ENCODE measurements at regions of chr9 and their contacts with region 1.

Region 1: DNA sequence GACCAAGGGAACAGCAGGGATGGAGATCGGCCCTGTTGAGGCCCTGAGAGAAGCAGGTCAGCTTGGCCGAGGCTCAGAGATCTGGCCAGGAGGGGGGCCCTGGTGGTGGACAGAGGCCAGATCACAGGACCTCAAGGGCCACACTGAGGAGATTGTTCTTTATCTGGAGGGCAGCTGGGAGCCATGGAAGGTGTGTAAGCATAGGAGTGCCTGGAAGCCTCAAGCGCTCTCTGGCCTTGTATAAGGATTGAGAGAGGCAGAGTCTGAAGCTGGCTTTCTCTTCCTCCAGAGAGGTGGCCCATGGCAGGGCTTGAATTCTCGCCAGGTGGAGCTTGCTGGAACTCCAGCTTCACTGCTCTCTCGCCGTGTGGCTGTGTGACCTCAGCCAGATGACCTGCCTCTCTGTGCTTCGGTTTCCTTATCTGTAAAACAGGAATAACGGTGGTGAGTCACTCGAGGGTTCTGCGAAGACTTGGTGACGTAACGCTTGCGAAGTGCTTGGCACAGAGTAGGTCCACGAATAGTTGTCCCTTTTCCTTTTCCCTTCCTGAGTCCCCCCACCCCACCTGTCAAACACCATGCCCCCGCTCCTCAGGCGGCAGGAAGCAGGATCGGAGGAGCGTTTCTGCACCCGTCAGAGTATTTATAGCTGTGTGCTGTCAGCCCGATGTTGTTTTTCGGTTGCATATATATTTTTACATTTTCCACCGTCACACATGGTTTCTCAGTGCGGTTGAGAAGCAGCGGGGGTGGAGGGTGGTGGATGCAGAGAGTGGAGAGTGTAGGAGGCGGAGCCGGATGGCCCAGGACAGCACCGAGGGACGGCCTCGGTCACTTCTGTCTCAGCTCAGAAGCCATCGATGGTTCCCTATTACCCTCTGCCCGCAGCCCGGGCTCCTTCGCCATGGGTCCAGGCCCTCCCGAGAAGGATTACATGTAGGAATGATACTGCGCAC is 17.0 kb upstream of the CRB2 start:
- DNase-seq: peak; percentile 87
- ATAC-seq: peak; percentile 75
- H3K4me3 Mint-ChIP-seq: peak overlapping the region; percentile 62
- H3K27ac Mint-ChIP-seq: peak overlapping the region; percentile 99
- H3K4me1 Mint-ChIP-seq: peaks cover 35% of the 10 kb centered on the region
- H3K27me3 Mint-ChIP-seq: no peaks in the 10 kb centered on the region

Region 2: DNA sequence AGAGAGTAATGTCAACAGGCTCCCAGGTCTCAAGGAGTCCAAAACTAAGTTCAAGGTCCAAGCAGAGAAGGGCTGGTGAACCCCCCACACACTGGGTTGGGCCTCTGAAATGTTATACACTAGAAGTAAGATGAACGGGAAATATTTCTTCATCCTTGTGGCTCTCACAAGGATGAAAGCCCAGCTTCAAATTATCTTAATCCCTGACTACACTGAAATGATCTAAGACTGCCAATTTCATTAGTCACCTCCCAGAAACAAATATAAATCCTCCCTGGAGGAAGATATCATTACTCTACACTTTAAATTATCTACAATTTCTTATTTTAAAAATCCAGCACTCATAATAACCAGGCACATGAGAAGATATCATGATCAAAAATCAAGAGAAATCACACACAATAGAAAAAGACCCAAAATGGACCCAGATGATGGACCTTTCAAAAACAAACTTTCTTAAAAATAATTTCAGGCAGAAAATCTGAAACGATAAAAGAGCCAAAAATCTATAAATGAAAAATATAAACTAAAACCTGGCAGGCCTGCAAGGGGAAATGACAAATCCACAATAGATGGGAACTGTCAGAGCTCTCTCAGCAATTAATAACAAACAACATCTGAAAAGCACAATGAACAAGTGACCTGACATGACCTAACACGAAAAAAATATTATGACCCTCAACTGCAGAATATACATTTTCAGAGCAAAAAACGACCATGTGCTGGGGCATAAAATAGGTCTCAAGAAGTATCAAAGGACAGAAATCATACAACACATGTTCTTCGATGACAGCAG is 188.1 kb before region 1 on chr9:
- CTCF ChIA-PET with region 1: no interaction called
- POLR2A ChIA-PET with region 1: no interaction called
- intact Hi-C with region 1: no loop called
- DNase-seq: no peak
- ATAC-seq: no peak
- H3K4me3 Mint-ChIP-seq: no peak overlapping the region
- H3K27ac Mint-ChIP-seq: no peak overlapping the region
- H3K4me1 Mint-ChIP-seq: no peaks in the 10 kb centered on the region
- H3K27me3 Mint-ChIP-seq: no peaks in the 10 kb centered on the region

Region 3: DNA sequence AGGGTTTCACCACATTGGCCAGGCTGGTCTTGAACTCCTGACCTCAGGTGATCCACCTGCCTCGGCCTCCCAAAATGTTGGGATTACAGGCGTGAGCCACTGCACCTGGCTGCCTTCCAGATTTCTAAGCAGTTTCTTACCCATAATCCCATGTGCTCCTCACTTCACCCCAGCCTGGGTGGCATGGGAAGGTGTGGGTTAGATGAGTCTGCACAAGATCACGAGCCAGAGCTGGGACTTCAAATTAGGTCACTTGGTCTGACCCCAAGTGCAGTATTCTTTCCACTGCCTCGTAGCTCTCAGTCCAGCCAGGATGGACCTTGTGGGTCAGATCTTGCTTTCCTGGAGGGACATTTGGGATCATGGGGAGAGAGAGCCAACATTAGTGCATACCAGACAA is 33.1 kb before region 1 on chr9:
- CTCF ChIA-PET with region 1: interaction called, 5 read pairs
- POLR2A ChIA-PET with region 1: interaction called, 3 read pairs
- intact Hi-C with region 1: loop called in 1 of 2 experiments (anchors 1 kb)
- DNase-seq: no peak
- ATAC-seq: no peak
- H3K4me3 Mint-ChIP-seq: no peak overlapping the region
- H3K27ac Mint-ChIP-seq: no peak overlapping the region
- H3K4me1 Mint-ChIP-seq: peaks cover 36% of the 10 kb centered on the region
- H3K27me3 Mint-ChIP-seq: no peaks in the 10 kb centered on the region

Region 4: DNA sequence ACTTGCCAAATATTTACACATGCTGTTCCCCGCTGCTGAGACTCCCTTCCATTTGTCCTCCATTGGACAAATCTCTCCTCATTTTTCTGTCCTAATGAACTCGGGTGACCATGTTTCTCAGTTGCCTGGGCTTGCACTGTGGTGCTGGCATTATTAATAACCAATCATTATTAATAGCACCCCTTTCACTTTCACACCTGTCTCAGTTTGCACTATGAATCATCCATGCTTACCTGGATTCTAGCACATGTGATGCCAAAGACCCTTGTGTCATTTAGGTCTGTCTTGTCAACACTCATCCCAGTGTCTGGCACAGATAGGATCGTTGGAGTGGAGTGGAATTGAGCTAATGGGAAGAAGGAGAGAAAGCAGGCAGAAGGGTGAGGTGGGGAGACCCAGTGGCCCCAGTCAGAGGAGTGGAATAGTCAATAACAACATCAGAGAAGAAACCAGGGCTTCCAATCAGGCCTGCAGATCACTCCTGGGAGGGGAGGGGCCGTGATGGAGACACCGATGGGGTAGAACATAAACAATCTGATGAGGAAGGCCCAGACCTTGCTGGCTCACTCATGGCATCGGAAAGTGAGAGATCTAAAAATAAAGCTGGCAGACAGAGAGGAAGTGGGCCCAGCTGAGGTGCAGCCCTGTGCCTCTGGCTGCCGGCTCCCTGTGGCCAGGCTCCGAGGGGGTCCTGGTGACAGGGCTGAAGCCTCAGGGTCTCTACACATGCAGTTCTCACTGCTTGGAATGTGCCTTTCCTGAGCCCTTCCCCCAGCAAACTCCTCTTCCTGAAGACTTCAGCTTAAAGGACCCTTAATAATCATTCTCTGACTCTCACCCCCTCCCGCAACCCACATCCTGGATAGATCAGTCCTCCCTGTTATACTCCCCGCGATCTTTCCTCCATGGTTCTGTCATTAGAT is 16.5 kb before region 1 on chr9:
- CTCF ChIA-PET with region 1: interaction called, 5 read pairs
- POLR2A ChIA-PET with region 1: interaction called, 20 read pairs
- intact Hi-C with region 1: loop called (anchors 1 to 2 kb)
- DNase-seq: peak; percentile 79
- ATAC-seq: peak; percentile 89
- H3K4me3 Mint-ChIP-seq: peak overlapping the region; percentile 39
- H3K27ac Mint-ChIP-seq: peak overlapping the region; percentile 92
- H3K4me1 Mint-ChIP-seq: peaks cover 35% of the 10 kb centered on the region
- H3K27me3 Mint-ChIP-seq: no peaks in the 10 kb centered on the region

Region 5: DNA sequence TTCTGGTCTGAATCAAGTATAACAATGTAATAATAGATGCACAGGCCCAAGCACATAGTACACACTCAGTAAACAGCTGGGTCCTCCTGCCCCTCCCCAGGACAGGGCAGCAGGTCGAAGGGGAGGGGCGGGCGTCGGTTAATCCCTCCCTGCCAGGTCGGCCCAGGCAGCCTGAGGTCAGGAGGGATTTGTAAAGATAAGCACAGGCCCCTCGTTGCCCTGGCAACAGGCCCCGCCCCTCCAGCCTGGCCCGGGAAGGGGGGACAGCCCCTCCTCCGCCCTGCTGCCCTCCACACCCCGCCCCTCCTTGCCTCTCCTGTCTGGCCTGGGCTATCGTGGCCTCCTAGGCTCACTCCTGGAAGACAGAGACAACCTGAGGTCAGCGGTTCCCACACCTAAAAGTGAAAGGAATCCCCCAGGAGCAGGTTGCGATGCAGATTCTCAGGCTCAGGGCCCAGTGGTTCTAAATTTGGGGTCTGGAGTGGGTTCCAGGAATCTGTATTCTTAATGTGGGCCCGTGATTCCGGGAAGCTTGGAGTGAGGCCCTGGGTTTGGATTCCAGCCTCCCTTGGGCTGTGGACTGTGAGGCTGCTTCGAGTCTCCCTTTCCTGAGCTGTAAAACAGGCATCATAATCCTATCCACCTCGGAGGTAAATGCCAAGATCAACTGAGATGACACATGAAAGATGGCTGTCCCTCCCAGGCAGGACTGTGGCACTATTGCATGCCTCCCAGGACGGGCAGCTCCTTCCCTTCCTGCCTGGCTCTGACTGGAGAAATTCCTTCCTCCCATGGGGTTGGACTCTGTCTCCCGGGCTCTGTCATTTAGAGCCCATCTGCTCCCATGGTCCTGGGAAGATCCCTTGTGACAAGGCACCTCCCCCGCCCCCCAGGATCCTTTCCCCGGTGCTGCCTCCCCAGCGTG is 21.4 kb after region 1 on chr9:
- CTCF ChIA-PET with region 1: no interaction called
- POLR2A ChIA-PET with region 1: no interaction called
- intact Hi-C with region 1: no loop called
- DNase-seq: peak; percentile 65
- ATAC-seq: peak; percentile 52
- H3K4me3 Mint-ChIP-seq: no peak overlapping the region
- H3K27ac Mint-ChIP-seq: no peak overlapping the region
- H3K4me1 Mint-ChIP-seq: peaks cover 16% of the 10 kb centered on the region
- H3K27me3 Mint-ChIP-seq: peaks cover 2% of the 10 kb centered on the region

Region 6: GRCh38 chr9:123954518-123955280 is 615.7 kb after region 1 on chr9:
- CTCF ChIA-PET with region 1: no interaction called
- POLR2A ChIA-PET with region 1: no interaction called
- intact Hi-C with region 1: no loop called
- DNase-seq: no peak
- ATAC-seq: no peak
- H3K4me3 Mint-ChIP-seq: no peak overlapping the region
- H3K27ac Mint-ChIP-seq: no peak overlapping the region
- H3K4me1 Mint-ChIP-seq: peaks cover 10% of the 10 kb centered on the region
- H3K27me3 Mint-ChIP-seq: peaks cover 11% of the 10 kb centered on the region